Activated T-helper 1 cell treated with anti-CD3 and anti-CD28 coated beads, Interleukin-12 subunit alpha, Interleukin-12 subunit beta, Interleukin-2, Interleukin-4 antibody, amounts not matched to agents 30 ng/mL and 10 ng/mL and 1 ng/mL, durations not matched to agents 14 hours and 24 hours and 36 hours (primary cell): ENCODE measurements at regions of chr19 and their contacts with region 1.

Region 1: GRCh38 chr19:51926784-51927742 is at the start of gene ZNF613:
- DNase-seq: peak; percentile 73
- H3K4me3 Mint-ChIP-seq: peak within 1 kb of the TSS; percentile 99
- H3K27ac Mint-ChIP-seq: peak within 1 kb of the TSS; percentile 94
- H3K4me1 Mint-ChIP-seq: peaks cover 23% of the 10 kb centered on the region
- H3K27me3 Mint-ChIP-seq: no peaks in the 10 kb centered on the region
- total RNA-seq, gene ZNF613: 3.1 and 3.8 TPM in 2 replicates

Region 2: GRCh38 chr19:51564791-51565190 is 362.3 kb before region 1 on chr19:
- intact Hi-C with region 1: no loop called
- DNase-seq: no peak
- H3K4me3 Mint-ChIP-seq: no peak overlapping the region
- H3K27ac Mint-ChIP-seq: no peak overlapping the region
- H3K4me1 Mint-ChIP-seq: no peaks in the 10 kb centered on the region
- H3K27me3 Mint-ChIP-seq: peaks cover 20% of the 10 kb centered on the region

Region 3: GRCh38 chr19:51904331-51905165 is 22.5 kb before region 1 on chr19 and contains the start of gene ZNF649:
- intact Hi-C with region 1: loop called (anchors 1 kb)
- DNase-seq: peak; percentile 70
- H3K4me3 Mint-ChIP-seq: peak within 1 kb of the TSS; percentile 98
- H3K27ac Mint-ChIP-seq: peak within 1 kb of the TSS; percentile 99
- H3K4me1 Mint-ChIP-seq: peaks cover 21% of the 10 kb centered on the region
- H3K27me3 Mint-ChIP-seq: peaks cover 3% of the 10 kb centered on the region
- total RNA-seq, gene ZNF649: 10.5 and 12.3 TPM in 2 replicates

Region 4: DNA sequence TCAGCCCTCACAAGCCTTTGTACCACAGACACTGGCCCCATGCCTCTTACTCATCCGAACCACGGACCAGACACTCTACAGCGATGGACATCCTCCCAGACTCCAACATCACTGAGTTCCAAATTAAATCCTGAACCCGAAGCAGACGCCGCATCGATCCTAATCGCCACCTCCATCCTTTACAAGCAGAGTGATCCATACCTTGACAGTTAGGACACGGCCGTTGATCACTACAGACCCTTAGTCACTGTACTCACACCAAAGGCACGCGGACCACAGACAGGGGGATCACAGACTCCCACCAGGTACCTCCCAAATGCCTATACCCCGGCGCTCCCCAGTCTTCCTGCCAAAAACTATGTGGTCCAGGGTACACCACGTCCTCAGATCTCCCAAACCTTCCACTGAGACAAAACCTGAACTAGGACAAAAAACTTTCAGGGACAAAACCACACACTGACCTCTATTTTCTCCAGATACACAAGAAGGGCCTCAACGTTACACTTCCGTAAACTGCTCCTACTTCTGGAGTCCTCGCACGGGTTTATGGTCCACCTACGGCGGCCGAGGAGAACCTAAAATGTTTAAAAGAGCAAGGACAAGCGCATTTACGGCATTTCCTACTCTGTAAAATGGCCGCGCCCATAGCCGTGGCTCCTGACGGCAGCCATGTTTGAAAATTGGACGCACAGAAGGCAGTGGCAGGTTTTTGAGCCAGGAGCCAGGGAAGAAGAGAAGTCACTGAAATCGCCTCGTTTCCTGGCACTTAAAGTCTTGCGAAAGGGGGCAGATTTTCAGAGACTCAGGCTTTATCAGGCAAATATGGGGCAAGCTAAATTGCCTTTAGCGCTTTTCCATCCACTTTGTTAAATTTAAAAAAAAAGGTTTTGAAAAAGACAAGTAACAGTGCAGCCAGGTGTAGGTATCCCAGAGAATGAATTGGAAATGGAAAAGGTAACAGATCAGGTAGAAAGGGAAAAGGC is 59.5 kb after region 1 on chr19 and contains the start of gene ZNF350:
- intact Hi-C with region 1: loop called (anchors 1 kb)
- DNase-seq: peak; percentile 83
- H3K4me3 Mint-ChIP-seq: peak within 1 kb of the TSS; percentile 94
- H3K27ac Mint-ChIP-seq: peak within 1 kb of the TSS; percentile 88
- H3K4me1 Mint-ChIP-seq: peaks cover 12% of the 10 kb centered on the region
- H3K27me3 Mint-ChIP-seq: no peaks in the 10 kb centered on the region
- total RNA-seq, gene ZNF350: 7.9 and 8.7 TPM in 2 replicates

Region 5: GRCh38 chr19:52007806-52008557 is 80.9 kb after region 1 on chr19 and contains the start of gene ZNF615:
- intact Hi-C with region 1: loop called (anchors 1 kb)
- DNase-seq: peak; percentile 80
- H3K4me3 Mint-ChIP-seq: peak within 1 kb of the TSS; percentile 94
- H3K27ac Mint-ChIP-seq: peak within 1 kb of the TSS; percentile 94
- H3K4me1 Mint-ChIP-seq: peaks cover 20% of the 10 kb centered on the region
- H3K27me3 Mint-ChIP-seq: no peaks in the 10 kb centered on the region
- total RNA-seq, gene ZNF615: 6.4 and 6.9 TPM in 2 replicates

Region 6: DNA sequence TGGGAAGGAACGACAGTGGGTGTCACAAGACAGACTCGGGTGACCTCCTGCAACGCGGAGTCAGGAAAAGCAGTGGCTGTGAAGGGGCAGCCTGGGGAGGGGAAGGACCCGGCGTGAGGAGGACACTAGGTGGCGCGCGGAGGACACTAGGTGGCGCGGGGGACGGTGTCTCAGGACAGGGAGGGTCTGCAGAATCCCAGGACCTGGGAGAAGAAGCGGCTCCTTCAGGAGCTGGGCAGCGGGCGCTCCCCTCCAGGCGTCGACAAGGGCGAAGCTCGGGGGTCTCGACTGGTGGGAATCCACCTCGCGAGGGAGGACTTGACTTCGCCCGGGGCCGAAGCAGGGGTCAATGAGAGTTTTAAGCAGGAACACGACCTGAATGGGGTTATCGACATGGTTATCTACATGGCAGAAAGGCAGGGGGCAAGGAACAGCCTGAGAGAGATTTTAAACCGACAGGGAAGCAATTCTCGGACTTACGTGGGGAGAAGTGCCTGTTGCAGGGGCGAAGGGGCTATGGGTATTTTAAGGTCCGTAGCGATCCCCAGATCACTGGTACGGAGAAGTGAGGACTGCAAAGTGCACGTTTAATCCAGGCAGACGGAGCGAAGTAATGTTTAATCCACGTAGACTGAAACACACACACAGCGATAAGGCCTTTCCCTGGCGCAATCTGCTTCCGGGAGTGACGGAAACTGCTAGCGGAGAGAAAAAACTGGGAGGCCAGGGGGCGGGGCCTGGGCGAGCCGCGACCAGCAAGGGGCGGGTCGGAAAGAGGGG is 212.4 kb after region 1 on chr19 and contains the start of gene ZNF616:
- intact Hi-C with region 1: loop called (anchors 1 kb)
- DNase-seq: peak; percentile 94
- H3K4me3 Mint-ChIP-seq: peak within 1 kb of the TSS; percentile 98
- H3K27ac Mint-ChIP-seq: peak within 1 kb of the TSS; percentile 94
- H3K4me1 Mint-ChIP-seq: peaks cover 23% of the 10 kb centered on the region
- H3K27me3 Mint-ChIP-seq: no peaks in the 10 kb centered on the region
- total RNA-seq, gene ZNF616: 4.1 and 6.7 TPM in 2 replicates

Region 7: DNA sequence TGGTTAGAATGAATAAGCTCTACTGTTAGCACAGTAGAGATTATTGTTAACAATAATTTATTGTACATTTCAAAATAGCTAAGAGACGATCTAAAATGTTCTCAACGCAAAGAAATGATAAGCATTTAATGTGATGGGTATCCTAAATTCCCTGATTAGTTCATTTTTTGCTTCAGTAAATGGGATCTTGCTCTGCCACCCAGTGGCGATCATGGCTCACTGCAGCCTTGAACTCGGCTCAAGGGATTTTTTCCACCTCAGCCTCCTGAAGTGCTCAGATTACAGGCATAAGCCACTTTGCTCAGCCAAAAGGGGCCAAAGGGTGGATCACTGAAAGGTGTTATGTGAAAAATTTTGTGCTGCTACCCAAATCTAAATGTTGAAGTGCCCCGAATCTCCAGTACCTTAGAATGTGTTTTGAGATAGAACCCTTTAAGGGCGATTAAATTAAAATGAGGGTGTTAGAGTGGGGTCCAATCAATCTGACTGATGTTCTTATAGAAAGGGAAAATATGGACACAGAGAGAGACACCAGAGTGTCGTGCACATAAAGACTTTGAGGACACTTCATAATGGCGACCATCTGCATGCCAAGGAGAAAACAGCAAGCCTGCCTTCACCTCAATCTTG is 310.8 kb after region 1 on chr19:
- intact Hi-C with region 1: loop called (anchors 10 kb)
- DNase-seq: peak; percentile 34
- H3K4me3 Mint-ChIP-seq: no peak overlapping the region
- H3K27ac Mint-ChIP-seq: no peak overlapping the region
- H3K4me1 Mint-ChIP-seq: no peaks in the 10 kb centered on the region
- H3K27me3 Mint-ChIP-seq: peaks cover 1% of the 10 kb centered on the region